Dorsolateral prefrontal cortex (tissue), 120 donors: ENCODE measurements at regions of chr11 and their contacts with region 1.

Region 1: DNA sequence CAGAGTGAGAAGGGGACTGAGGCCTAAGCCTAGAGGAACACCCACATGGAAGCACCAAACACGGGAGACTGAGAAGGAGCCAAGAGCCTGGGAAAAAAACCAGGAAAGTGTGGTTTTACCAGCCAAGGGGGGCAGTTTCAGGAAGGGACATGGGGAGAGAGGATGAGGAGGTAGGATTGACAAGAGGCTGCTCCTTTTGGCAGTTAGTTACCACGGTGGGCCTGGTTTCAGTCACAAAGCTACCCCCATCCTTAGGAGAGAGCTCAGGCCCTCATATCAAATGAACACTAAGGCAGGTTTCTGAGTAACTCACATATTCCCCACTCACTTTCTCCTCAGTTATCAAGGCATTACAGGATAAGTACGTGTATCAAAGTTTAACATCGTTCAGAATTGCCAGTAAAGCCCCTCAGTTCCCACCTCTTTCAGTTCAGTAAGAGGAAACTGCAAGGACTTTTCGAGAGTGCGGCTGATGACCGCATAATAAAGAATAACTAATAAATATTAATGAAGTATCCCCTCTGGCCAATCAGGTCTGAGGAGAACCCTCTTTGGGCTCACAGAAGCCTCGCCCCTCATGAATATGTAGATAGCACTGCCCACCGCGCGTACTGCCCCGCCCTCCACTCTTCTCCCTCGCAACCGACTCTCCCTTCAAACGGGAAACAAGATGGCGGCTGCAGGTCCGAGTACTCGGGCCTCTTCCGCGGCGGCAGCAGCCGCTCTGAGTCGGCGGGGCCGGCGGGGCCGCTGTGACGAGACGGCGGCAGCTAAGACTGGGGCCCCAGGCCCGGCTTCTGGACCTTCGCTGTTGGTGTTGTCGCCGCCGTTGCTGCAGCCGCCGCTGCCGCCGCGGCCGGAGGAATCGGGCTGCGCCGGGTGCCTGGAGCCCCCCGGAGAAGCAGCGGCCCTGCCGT is at the start of gene RNF169:
- DNase-seq: peak; percentile 84 to 97 (median 96)
- H3K4me3 ChIP-seq: peak within 1 kb of the TSS; percentile 60 to 94 (median 82)
- H3K27ac ChIP-seq: peak within 1 kb of the TSS; percentile 60 to 99 (median 93)
- H3K27me3 ChIP-seq: no peaks in the 10 kb centered on the region
- CTCF ChIP-seq: peak in 12 of 56 donors; percentile 12 to 27 (median 17)
- total RNA-seq, gene RNF169: 13.4 to 32.9 (median 19.4) TPM

Region 2: GRCh38 chr11:74820763-74821162 is 72.3 kb after region 1 on chr11:
- intact Hi-C with region 1: loop called in 1 of 2 experiments (anchors 5 kb)
- DNase-seq: no peak
- H3K4me3 ChIP-seq: no peak overlapping the region
- H3K27ac ChIP-seq: peak overlapping the region in 18 of 59 donors; percentile 9 to 64 (median 36)
- H3K27me3 ChIP-seq: no peaks in the 10 kb centered on the region
- CTCF ChIP-seq: no peak

Region 3: DNA sequence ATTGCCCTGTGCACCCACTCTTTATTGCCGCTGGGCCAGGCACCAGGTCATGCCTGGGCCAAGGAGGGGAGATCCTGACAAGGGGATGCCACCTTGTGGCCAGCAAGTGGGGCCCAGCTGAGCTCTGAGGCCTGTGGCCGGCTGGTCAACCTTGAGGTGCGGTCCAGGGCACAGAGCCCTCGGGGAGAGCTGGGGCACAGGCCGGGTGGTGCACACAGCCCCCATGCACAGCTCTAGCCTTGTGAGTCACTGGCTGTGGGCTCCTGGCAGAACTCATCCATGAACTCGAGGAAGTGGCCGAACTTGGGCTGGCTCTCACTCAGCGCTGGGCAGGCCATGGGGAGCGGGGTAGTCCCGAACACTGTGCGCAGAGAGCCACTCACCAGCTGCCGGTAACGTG is 94.5 kb after region 1 on chr11:
- intact Hi-C with region 1: loop called (anchors 5 to 10 kb)
- DNase-seq: peak in 1 of 10 donors; percentile 30
- H3K4me3 ChIP-seq: no peak overlapping the region
- H3K27ac ChIP-seq: peak overlapping the region in 3 of 59 donors; percentile 1 to 36 (median 25)
- H3K27me3 ChIP-seq: no peaks in the 10 kb centered on the region
- CTCF ChIP-seq: peak in 33 of 56 donors; percentile 6 to 55 (median 30)

Region 4: DNA sequence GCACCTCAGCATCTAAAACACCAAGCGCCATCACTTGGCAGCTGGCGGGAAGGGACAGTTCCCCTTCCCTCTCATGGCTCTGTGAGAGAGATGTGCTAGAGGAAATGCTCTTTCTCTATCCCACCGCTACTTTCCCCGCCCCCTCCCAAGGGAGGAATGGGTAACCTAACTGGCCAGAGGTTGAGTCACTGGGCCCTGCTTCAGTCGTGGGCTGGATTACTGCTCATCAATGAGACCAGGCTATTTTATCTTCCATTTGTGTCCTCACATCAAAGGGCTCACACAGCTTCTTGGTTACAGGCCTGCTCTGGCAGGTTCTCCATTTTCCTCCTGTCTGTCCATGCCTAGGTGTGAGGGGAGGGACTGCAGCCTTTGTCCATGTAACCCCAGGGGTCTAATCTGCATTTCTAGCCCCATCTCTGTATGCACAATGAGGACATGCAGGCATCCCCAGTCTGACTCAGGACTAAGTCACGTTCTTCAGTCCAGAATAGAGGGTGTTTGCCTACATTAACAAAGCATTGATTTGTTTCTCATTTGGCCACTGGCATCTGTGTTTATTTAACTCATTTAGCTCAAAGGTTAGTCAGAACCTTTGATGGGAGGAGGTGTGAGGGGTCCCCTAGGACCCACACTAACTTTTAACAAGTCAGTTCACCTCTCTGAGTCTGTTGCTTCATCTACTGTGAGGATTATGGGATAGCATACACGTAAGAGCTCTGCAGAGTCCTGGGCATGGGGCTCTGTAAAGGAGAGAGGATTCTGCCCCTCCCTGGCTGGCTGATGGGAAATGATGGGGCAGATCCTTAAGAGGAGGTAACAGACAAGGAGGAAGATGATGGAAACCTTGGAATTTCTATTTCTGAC is 101.3 kb after region 1 on chr11:
- intact Hi-C with region 1: loop called (anchors 5 to 10 kb)
- DNase-seq: no peak
- H3K4me3 ChIP-seq: no peak overlapping the region
- H3K27ac ChIP-seq: peak overlapping the region in 1 of 59 donors; percentile 17
- H3K27me3 ChIP-seq: no peaks in the 10 kb centered on the region
- CTCF ChIP-seq: no peak